ENCODE measurements at regions of chr12 and their contacts with region 1.

Region 1: DNA sequence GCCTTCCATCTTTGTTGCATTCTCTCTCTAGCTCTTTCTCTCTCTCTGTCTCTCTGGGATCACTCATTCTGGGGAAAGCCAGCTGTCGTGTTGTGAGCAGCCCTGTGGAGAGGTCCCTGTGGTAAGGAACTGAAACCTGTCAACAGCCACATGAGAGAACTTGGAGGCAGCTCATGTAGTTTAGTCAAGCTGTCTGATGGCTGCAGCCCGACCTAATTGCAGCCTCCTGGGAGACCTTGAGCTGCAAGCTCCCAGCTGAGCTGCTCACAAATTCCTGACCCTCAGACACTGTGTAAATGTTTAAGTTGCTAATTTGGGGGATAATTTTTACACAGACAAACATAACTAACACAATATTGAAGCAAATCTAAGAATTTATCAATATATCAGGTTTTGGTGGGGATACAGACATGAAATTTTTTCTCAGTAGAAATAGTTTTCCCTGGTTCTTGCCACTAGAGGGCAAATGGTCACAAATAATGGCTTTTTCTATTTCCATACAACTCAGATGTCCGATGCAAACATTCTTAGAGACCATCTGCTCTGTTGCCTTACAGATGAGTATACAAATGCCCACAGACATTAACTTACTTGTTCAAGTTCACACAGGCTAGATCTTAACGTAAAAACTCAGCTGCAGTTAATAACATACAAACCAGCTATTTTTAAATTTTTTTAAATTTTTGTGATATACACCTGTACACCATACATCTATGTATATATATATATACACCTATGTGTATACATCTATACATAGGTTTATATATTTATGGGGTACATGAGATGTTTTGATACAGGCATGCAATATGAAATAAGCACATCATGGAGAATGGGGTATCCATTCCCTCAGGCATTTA is 15.5 kb upstream of the KRR1 start:
- DNase-seq: no peak
- H3K4me3 Mint-ChIP-seq: no peak overlapping the region
- H3K27ac Mint-ChIP-seq: no peak overlapping the region
- H3K4me1 Mint-ChIP-seq: peaks cover 12% of the 10 kb centered on the region
- H3K27me3 Mint-ChIP-seq: peaks cover 42% of the 10 kb centered on the region

Region 2: DNA sequence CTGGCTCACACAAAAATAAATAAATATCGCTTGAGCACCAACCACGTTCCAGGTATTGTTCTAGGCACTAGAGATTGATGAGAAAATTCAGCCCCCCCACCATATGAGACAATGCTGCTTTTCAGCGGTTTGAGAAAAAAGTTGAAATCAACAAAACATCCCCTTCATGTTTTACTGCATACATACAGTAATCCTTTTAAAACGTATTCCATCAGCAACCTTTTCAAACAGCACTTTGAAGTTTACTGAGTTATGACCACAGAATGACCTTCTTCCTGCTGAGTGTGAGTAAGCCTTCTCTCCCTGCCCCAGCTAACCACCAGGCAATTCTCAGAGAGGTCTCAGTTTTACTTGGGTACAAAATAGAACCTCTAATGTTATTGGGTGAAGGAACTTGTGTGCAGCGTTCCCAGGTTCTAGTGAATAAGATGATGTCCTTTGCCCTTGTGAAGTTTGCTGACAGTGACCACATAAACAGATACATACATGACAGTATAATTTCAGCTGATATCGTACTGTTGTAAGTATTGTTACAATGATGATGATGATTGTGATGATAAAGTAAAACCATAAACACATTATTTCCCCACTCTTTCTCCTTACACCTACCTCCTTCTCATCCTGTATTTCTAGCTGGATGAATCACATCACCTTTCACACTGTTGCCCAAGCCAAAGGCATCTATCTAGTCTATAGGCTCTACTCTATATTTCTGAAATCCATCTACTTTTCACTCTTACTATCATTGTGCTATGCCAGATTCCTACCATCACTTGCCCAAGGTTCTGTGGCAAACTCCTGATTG is 108.9 kb after region 1 on chr12:
- intact Hi-C with region 1: loop called (anchors 5 kb)
- DNase-seq: no peak
- H3K4me3 Mint-ChIP-seq: no peak overlapping the region
- H3K27ac Mint-ChIP-seq: peak overlapping the region; percentile 54
- H3K4me1 Mint-ChIP-seq: peaks cover 38% of the 10 kb centered on the region
- H3K27me3 Mint-ChIP-seq: peaks cover 3% of the 10 kb centered on the region

Region 3: DNA sequence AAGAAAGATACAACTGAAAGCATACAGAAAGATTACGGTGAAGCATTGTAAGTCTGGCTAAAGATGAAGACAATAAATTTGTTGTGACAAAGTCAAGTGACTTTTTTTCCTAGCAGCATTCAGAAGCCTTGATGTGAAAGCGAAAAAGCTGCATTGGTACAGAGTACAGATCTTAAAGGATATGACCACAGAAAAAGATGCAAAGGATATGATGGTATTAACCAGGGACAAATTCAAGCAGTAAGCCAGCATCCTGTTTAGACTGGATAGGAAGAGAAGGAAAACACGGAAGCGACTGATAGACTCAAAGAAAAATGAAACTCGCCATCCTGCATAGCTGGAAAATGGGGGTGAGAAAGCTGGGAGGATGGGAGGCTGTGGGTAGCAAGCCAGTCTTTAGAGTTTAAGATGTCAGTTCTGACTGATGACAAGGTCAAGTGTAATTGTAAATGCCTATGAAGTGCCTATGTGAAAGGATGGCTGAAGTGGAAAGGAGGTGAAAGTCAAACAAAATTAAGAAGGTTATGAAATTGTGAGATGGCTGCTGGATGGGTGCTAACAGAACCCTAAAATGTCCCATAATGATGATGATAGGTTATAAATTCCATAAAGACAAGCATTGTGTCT is 412.2 kb after region 1 on chr12:
- intact Hi-C with region 1: loop called (anchors 5 kb)
- DNase-seq: peak; percentile 20
- H3K4me3 Mint-ChIP-seq: no peak overlapping the region
- H3K27ac Mint-ChIP-seq: no peak overlapping the region
- H3K4me1 Mint-ChIP-seq: peaks cover 14% of the 10 kb centered on the region
- H3K27me3 Mint-ChIP-seq: no peaks in the 10 kb centered on the region

Region 4: GRCh38 chr12:76037130-76038103 is 510.5 kb after region 1 on chr12:
- intact Hi-C with region 1: loop called (anchors 1 kb)
- DNase-seq: no peak
- H3K4me3 Mint-ChIP-seq: no peak overlapping the region
- H3K27ac Mint-ChIP-seq: no peak overlapping the region
- H3K4me1 Mint-ChIP-seq: peaks cover 30% of the 10 kb centered on the region
- H3K27me3 Mint-ChIP-seq: no peaks in the 10 kb centered on the region

Region 5: DNA sequence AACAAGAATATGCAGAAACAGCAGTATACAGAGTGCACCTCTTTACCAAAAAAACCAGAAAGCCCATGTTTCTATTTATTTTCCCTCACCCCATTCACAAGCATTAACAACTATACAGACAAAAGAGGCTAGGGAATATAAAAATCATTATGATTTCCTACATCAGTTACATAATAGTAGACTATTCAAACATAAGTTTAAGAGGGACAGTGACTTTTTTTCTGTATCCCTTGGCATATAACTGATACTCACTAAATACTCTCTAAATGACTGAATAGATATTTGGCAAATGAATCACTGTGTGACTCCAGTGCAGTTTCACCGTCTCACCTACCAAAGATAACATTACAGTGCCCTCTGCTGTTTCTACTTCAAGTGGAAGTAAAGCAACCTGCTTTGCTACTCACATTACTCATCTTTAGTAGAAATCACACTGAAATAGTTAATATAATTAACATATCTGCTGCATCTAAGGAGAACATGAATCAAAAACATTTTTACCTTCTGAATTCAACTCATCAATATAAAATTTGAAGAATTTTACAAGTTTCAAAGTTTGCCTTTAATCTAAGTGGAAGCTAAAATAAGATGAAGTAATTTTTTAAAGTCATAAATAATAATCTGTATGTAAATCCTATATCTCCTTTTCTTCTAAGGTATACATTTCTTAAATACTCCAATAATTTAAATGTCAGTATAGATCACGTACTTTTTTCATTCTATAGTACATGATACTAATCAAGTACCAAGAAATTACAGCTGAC is 928.9 kb after region 1 on chr12:
- intact Hi-C with region 1: loop called (anchors 5 kb)
- DNase-seq: no peak
- H3K4me3 Mint-ChIP-seq: no peak overlapping the region
- H3K27ac Mint-ChIP-seq: no peak overlapping the region
- H3K4me1 Mint-ChIP-seq: peaks cover 8% of the 10 kb centered on the region
- H3K27me3 Mint-ChIP-seq: no peaks in the 10 kb centered on the region

Measured in activated T-helper 2 cell treated with anti-CD3 and anti-CD28 coated beads, Interferon-gamma antibody, Interleukin-2, Interleukin-4, amounts not matched to agents 10 μg/mL and 5 μg/mL and 100 μg/mL, durations not matched to agents 14 hours and 24 hours and 36 hours (primary cell).